ENCODE measurements at regions of chr7 and their contacts with region 1.

Region 1: GRCh38 chr7:134327896-134328295 is 11.2 kb upstream of the SLC35B4 start:
- DNase-seq: peak; percentile 74 to 87
- H3K4me3 ChIP-seq: no peak overlapping the region
- H3K4me1 ChIP-seq: no peaks in the 10 kb centered on the region
- H3K27me3 ChIP-seq: no peaks in the 10 kb centered on the region

Region 2: DNA sequence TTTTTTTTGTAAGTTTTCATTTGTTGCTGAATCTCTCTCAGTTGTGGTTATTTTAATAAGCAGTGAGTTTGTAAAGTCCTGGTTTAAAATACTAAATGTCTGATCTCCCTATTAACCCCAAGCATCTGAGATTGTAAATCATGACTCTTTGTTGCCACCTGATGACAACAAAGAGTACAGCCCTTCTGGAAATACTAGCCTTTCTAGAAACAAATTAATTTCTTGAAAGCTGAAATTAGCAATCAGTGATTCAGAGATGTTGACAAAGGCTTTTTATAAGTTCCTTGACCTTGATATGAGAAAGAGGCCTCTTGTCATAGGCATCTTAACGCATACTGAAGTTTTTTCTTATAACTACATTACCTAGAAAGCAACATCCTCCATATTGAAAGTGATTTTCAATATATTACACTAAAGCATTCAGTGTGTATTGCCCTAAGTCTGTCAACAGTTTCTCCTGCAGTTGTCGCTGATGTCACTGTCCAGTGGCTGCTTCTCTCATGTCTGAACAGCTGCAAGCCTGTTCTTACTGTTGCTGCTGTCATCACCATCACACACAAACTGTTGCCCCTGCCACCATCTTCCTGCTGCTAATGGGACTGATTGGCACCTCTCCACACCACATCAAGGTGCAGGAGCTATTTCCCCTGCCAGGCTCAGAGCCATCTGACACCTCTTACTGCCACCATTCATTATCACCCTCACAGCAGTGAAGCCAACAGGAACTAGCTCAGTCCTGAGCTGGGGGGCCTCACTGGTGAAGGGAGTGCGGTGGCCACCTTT is 295.9 kb before region 1 on chr7:
- in situ Hi-C with region 1: loop called (anchors 25 kb)
- DNase-seq: no peak
- H3K4me3 ChIP-seq: no peak overlapping the region
- H3K4me1 ChIP-seq: peaks cover 2% of the 10 kb centered on the region; the same call in 1 of the 2 replicates
- H3K27me3 ChIP-seq: no peaks in the 10 kb centered on the region